HepG2 (cell line): ENCODE measurements at regions of chr20 and their contacts with region 1.

Region 1: GRCh38 chr20:41534842-41535241 is 83.3 kb downstream of the CHD6 start:
- DNase-seq: no peak
- ATAC-seq: no peak
- H3K4me3 ChIP-seq: no peak overlapping the region
- H3K27ac ChIP-seq: no peak overlapping the region
- H3K4me1 ChIP-seq: peaks cover 72% of the 10 kb centered on the region
- H3K27me3 ChIP-seq: no peaks in the 10 kb centered on the region
- CTCF ChIP-seq: no peak
- EP300 ChIP-seq: no peak
- POLR2A ChIP-seq: no peak
- RAD21 ChIP-seq: no peak

Region 2: DNA sequence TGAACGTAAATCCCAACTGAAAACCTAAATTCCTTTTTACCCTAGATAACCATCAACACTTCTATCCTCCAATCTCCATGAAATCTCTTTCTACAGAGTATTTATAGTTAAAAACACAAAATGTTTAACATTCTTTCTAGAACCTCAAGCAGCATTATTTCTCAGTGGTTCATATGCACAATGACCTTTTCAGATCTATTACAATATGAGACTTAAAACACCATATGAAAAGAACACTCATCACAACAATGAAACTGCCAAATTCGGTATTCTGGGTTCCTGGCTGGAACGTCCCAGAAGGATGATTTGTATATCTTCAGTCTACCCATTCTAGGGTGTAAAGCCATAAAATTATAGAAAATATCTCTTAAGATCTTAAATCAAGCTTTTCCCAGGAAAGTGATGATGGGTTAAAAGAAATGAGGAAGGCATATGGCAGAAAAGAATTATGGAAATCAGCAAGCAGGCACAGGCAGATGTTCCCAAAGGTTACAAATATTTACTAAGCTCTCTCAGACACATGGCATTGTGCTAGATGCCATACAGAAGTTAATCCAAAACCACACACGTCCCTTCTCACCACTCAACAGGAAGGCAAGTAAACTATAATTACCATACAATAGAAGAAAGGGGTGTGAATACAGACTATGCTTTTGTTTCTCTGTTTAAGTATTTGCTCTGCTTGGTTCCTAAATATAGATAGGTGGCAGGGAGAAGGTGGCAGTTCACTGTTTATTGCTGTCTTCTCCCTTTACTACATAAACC is 34.7 kb before region 1 on chr20:
- CTCF ChIA-PET with region 1: no interaction called
- POLR2A ChIA-PET with region 1: no interaction called
- in situ Hi-C with region 1: no loop called
- intact Hi-C with region 1: loop called (anchors 5 kb)
- DNase-seq: no peak
- ATAC-seq: no peak
- H3K4me3 ChIP-seq: no peak overlapping the region
- H3K27ac ChIP-seq: no peak overlapping the region
- H3K4me1 ChIP-seq: peaks cover 55% of the 10 kb centered on the region
- H3K27me3 ChIP-seq: no peaks in the 10 kb centered on the region
- CTCF ChIP-seq: no peak
- EP300 ChIP-seq: no peak
- POLR2A ChIP-seq: no peak
- RAD21 ChIP-seq: no peak

Region 3: GRCh38 chr20:41510224-41510623 is 24.6 kb before region 1 on chr20:
- CTCF ChIA-PET with region 1: no interaction called
- POLR2A ChIA-PET with region 1: no interaction called
- in situ Hi-C with region 1: no loop called
- intact Hi-C with region 1: no loop called
- DNase-seq: no peak
- ATAC-seq: no peak
- H3K4me3 ChIP-seq: no peak overlapping the region
- H3K27ac ChIP-seq: peak overlapping the region; percentile 15
- H3K4me1 ChIP-seq: peaks cover 61% of the 10 kb centered on the region
- H3K27me3 ChIP-seq: no peaks in the 10 kb centered on the region
- CTCF ChIP-seq: no peak
- EP300 ChIP-seq: no peak
- POLR2A ChIP-seq: no peak
- RAD21 ChIP-seq: no peak

Region 4: DNA sequence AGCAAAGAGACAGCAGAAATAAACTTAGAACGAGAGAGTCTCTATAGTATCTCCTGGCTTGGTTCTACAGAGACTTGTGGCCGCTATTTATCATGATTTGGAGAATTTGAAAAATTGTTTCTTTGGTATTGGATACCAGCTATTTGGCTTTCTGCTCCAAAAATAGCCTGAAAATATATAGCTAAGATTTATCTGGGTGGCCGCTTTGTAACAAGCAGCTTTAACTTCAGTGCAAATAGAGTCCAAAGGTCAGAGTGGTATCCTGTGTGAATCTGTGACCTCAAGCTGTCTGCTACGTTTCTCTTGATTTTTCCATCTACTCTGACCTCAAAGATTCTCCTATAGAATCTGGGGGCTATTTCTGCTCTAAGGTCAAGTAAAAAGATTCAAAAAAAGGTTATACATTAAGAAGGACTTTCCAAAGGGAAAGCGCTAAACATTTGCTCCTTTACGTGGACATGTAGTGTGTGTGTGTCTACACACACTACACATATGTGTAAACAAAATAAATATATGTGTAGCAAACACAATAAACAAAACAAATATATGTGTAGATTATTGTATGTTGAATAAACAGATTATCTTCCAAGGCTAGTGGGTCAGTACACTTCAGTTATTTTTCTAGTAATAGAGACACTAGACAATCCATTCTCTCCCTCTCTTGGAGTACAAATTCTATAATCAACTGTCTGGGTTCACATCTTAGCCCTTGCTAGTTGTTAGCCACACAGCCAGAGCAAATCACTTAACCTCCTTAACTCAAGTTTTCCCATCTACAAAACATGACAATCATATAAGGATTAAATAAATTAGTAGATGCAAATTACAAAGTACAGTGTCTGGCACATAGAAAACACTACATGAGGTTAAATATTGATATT is 42.5 kb after region 1 on chr20:
- CTCF ChIA-PET with region 1: no interaction called
- POLR2A ChIA-PET with region 1: no interaction called
- in situ Hi-C with region 1: no loop called
- intact Hi-C with region 1: loop called (anchors 1 kb)
- DNase-seq: peak; percentile 93
- ATAC-seq: peak; percentile 91
- H3K4me3 ChIP-seq: peak overlapping the region; percentile 19 to 32 (median 32); a peak in 5 of 6 replicates
- H3K27ac ChIP-seq: peak overlapping the region; percentile 56
- H3K4me1 ChIP-seq: peaks cover 73% of the 10 kb centered on the region
- H3K27me3 ChIP-seq: no peaks in the 10 kb centered on the region
- CTCF ChIP-seq: no peak
- EP300 ChIP-seq: peak in 1 of 2 experiments; percentile 60; a peak in 2 of 4 replicates
- POLR2A ChIP-seq: no peak
- RAD21 ChIP-seq: 0 out of 2 replicates have a peak, but pooled peaks have one; percentile 18

Region 5: GRCh38 chr20:41693136-41693979 is 158.5 kb after region 1 on chr20:
- CTCF ChIA-PET with region 1: no interaction called
- POLR2A ChIA-PET with region 1: no interaction called
- in situ Hi-C with region 1: no loop called
- intact Hi-C with region 1: loop called (anchors 5 kb)
- DNase-seq: peak; percentile 95
- ATAC-seq: peak; percentile 96
- H3K4me3 ChIP-seq: peak overlapping the region; percentile 67 to 85 (median 73)
- H3K27ac ChIP-seq: peak overlapping the region; percentile 80
- H3K4me1 ChIP-seq: peaks cover 16% of the 10 kb centered on the region
- H3K27me3 ChIP-seq: peaks cover 0 to 9% of the 10 kb centered on the region in 2 experiments; a peak in 2 of 5 replicates
- CTCF ChIP-seq: peak; percentile 72
- EP300 ChIP-seq: no peak
- POLR2A ChIP-seq: peak; percentile 86 to 91
- RAD21 ChIP-seq: peak; percentile 63